ENCODE measurements at regions of chr5 and their contacts with region 1.

Region 1: DNA sequence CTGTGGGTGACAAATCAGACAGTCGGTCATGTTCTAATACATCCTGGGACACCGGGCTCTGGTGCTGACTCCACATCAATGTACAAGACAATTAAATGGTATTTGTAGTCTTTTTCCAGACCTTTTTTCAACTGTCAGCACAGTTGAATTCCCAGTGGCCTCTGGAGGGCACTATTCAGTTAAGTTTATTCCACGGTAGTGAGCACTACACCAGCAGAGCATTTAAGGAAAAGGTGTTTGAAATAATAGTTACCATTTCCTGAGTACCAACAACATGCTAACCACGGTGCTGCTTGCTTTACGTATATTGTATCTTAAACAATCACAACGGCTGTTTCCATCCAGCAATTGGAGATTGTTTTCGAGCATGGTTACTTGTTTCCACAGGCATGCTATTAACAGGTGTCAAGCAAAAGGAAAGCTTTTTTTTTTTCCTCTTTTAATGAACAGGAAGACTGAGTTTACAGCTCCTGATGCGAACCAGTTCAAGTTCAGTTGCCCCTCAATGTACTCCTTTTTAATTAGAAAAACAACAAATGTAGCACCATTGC is 186.7 kb downstream of the PDZD2 start:
- DNase-seq: no peak
- ATAC-seq: no peak
- H3K4me3 Mint-ChIP-seq: no peak overlapping the region
- H3K27ac Mint-ChIP-seq: no peak overlapping the region
- H3K4me1 Mint-ChIP-seq: no peaks in the 10 kb centered on the region
- H3K27me3 Mint-ChIP-seq: peaks cover 16% of the 10 kb centered on the region
- CTCF ChIP-seq: no peak

Region 2: DNA sequence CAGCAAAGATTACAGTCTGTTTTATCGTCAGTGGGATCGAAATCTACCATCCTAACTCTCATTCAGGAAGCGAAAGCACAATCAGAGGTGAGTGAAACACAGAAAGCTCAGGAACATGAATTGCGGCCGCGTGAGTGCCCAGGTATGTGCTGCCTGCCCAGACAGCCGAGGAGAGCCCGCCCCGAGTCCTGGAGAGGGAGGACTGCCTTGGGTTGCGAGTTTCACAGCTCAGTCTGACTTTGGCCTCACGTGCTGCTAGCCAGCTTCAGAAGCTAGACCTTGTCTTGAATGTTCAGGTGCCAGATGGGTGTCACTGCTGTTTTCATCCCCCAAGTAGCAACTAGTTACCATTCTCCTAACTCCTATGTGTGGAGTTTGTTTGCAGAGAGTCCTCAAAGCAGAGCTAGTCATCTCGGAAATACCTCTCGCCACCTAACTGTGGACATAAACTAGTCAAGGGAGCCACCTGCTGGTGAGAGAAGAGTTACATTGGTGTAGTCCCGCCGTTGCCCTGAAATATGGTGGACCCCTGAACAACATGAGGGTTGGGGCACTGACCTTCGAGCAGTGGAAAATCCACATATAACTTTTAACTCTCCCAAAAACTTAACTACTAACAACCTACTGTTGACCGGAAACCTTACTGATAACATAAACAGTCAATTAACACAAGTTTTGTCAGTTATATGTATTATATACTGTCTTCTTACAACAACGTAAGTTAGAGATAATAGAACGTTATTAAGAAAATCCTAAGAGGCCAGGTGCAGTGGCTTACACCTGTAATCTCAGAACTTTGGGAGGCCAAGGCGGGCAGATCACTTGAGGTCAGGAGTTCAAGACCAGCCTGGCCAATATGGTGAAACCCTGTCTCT is 267.6 kb after region 1 on chr5:
- CTCF ChIA-PET with region 1: no interaction called
- POLR2A ChIA-PET with region 1: no interaction called
- intact Hi-C with region 1: loop called (anchors 1 kb)
- DNase-seq: no peak
- ATAC-seq: peak; percentile 72
- H3K4me3 Mint-ChIP-seq: no peak overlapping the region
- H3K27ac Mint-ChIP-seq: no peak overlapping the region
- H3K4me1 Mint-ChIP-seq: peaks cover 6% of the 10 kb centered on the region
- H3K27me3 Mint-ChIP-seq: no peaks in the 10 kb centered on the region
- CTCF ChIP-seq: no peak